AG04449 (cell line): ENCODE measurements at regions of chr6 and their contacts with region 1.

Region 1: GRCh38 chr6:154276810-154277628 is 79.6 kb downstream of the IPCEF1 start:
- DNase-seq: no peak
- H3K4me3 ChIP-seq: no peak overlapping the region
- CTCF ChIP-seq: peak; percentile 21

Region 2: GRCh38 chr6:154156135-154156896 is 120.7 kb before region 1 on chr6:
- CTCF ChIA-PET with region 1: interaction called, 14 read pairs
- POLR2A ChIA-PET with region 1: no interaction called
- DNase-seq: no peak
- H3K4me3 ChIP-seq: no peak overlapping the region
- CTCF ChIP-seq: peak; percentile 80

Region 3: DNA sequence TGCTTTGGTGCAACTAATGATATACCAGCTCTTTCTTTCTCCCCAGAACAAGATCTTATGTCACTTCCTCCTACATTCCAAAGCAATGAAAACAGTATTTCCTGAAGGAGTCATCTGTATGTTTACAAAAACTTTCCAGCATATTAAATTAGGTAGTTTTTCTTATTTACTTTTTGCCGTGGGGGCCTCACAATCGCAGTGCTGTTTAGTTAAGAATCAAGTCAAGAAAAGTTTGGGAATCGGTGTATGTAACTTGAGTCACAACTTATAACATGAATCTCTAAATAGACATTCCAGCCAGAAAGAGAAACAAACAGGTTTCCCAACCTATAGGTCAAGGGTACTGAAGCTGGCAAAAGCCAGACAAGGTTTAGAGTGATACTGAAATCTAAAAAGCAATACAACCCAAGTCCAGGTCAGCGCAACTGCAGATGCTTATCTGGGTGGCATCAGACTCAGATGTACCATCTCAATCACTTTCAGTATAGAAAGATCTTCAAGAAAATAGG is 15.9 kb after region 1 on chr6:
- CTCF ChIA-PET with region 1: interaction called, 13 read pairs
- POLR2A ChIA-PET with region 1: no interaction called
- DNase-seq: peak; percentile 26
- H3K4me3 ChIP-seq: no peak overlapping the region
- CTCF ChIP-seq: no peak

Region 4: DNA sequence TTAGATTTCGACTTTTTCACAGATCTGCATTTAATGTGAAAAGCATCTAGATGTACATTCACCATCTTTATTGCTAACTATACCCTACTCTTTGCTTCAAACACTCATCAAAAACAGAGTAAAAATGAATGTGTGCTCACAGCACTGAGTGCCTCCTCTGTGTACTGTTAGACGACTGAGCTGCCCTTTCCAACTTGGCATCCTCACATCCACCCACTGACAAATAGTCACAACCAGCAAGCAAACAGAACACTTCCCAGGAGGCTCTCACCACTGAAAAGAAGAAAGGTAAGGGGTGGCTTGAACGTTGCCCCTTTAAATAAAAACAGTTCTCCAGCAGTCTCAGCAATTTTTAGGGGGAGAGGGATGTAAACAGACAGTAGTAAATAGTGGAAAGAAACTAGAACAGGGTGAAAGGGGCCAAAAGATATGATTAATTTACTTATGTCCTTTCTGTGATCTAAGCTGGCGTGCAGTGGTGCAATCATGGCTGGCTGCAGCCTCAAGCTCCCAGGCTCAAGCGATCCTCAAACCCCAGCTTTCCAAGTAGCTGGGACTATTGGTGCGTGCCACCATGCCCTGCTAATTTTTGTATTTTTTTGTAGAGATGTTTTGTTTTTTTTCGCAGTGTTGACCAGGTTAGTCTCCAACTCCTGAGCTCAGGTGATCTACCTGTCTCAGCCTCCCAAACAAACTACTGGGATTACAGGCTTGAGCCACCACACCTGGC is 30.8 kb after region 1 on chr6:
- CTCF ChIA-PET with region 1: no interaction called
- POLR2A ChIA-PET with region 1: no interaction called
- DNase-seq: no peak
- H3K4me3 ChIP-seq: no peak overlapping the region
- CTCF ChIP-seq: no peak